Activated T-helper 1 cell treated with anti-CD3 and anti-CD28 coated beads, Interleukin-12 subunit alpha, Interleukin-12 subunit beta, Interleukin-2, Interleukin-4 antibody, amounts not matched to agents 30 ng/mL and 10 ng/mL and 1 ng/mL, durations not matched to agents 14 hours and 24 hours and 36 hours (primary cell): ENCODE measurements at regions of chr1 and their contacts with region 1.

Region 1: DNA sequence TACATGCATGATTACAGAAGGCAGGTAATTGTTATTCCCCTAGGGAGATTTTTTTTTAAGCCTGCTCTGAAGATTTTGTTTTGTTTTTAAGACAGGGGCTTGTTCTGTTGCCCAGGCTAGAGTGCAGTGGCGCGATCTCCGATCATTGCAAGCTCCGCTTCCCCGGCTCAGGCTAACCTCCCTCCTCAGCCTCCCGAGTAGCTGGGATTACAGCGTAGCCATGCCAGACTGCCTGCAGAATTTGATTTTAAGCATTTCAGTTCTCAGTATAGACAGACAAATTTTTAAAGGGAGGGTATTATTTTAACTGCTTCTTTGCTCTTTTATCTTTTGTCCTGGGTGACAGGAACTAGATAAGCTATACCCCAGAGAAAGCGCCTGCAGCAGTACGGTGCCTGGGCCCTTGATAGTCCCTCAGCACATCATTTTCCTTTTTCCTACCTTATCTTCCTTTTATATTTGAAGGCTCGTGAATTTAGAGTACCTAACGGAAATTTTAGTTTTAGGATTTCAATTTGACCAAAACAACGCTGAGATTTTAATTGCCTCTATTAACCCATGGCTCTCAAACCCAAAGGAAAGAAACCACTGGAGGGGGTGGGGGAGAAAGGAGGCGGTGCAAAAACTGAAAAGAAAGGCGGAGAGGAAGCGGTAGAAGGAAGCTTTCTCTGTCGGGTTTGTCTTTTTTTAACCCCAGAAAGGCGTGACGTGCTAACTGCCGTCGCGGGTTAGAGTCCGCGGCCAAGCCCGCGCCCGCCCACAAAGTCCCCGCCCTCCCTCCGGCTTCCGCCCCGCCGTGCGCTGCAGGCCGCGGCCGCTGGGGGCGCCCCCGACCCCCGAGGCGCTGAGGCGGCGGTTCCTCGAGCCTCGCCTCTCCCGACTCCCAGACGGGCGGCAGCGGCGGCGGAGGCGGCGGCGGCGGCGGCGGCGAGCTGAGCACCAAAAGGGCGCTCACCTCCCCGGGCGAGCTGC is at the start of gene EEIG2:
- DNase-seq: peak; percentile 85
- H3K4me3 Mint-ChIP-seq: peak within 1 kb of the TSS; percentile 92
- H3K27ac Mint-ChIP-seq: peak within 1 kb of the TSS; percentile 83
- H3K4me1 Mint-ChIP-seq: peaks cover 31% of the 10 kb centered on the region
- H3K27me3 Mint-ChIP-seq: peaks cover 4% of the 10 kb centered on the region
- total RNA-seq, gene EEIG2: 16.7 and 18.5 TPM in 2 replicates

Region 2: GRCh38 chr1:106975944-106976343 is 1583.6 kb before region 1 on chr1:
- intact Hi-C with region 1: no loop called
- DNase-seq: no peak
- H3K4me3 Mint-ChIP-seq: no peak overlapping the region
- H3K27ac Mint-ChIP-seq: no peak overlapping the region
- H3K4me1 Mint-ChIP-seq: no peaks in the 10 kb centered on the region
- H3K27me3 Mint-ChIP-seq: no peaks in the 10 kb centered on the region

Region 3: DNA sequence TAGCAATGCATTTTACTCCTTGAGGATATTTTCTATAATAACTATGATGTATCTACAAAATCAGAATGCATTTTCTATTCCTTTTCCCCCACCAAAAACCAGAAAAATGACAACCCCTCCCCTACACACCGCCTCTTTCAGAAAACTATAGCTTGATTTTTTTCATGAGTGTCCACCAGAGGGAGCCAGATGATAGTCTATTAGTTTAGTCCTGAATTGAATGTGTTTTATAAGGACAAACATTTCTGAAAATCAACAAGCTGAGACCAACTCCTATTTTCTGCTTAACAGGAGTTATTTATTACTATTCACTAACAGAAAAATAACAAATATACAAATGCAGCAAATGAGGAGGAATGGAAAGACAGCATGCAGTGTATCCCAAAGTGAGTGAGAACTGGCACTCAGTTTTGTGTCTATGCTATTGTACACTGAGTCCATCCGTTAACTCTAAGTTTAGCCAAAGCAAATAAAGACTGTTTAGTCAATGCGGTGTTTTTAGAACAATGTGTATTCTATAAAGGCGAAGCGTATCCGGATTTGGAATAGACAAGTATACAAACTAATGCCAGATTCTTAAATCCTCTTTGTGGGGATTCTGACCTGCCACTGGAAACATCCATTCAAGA is 777.2 kb before region 1 on chr1:
- intact Hi-C with region 1: loop called (anchors 2 kb)
- DNase-seq: peak; percentile 16
- H3K4me3 Mint-ChIP-seq: no peak overlapping the region
- H3K27ac Mint-ChIP-seq: no peak overlapping the region
- H3K4me1 Mint-ChIP-seq: peaks cover 21% of the 10 kb centered on the region
- H3K27me3 Mint-ChIP-seq: no peaks in the 10 kb centered on the region

Region 4: GRCh38 chr1:108199781-108200570 is 359.5 kb before region 1 on chr1 and contains the start of gene SLC25A24:
- intact Hi-C with region 1: loop called (anchors 5 kb)
- DNase-seq: peak; percentile 83
- H3K4me3 Mint-ChIP-seq: peak within 1 kb of the TSS; percentile 91
- H3K27ac Mint-ChIP-seq: peak within 1 kb of the TSS; percentile 78
- H3K4me1 Mint-ChIP-seq: peaks cover 38% of the 10 kb centered on the region
- H3K27me3 Mint-ChIP-seq: peaks cover 7% of the 10 kb centered on the region
- total RNA-seq, gene SLC25A24: 14.6 and 16.6 TPM in 2 replicates

Region 5: GRCh38 chr1:108504447-108504846 is 55.1 kb before region 1 on chr1:
- intact Hi-C with region 1: loop called (anchors 2 kb)
- DNase-seq: no peak
- H3K4me3 Mint-ChIP-seq: no peak overlapping the region
- H3K27ac Mint-ChIP-seq: no peak overlapping the region
- H3K4me1 Mint-ChIP-seq: no peaks in the 10 kb centered on the region
- H3K27me3 Mint-ChIP-seq: peaks cover 41% of the 10 kb centered on the region

Region 6: DNA sequence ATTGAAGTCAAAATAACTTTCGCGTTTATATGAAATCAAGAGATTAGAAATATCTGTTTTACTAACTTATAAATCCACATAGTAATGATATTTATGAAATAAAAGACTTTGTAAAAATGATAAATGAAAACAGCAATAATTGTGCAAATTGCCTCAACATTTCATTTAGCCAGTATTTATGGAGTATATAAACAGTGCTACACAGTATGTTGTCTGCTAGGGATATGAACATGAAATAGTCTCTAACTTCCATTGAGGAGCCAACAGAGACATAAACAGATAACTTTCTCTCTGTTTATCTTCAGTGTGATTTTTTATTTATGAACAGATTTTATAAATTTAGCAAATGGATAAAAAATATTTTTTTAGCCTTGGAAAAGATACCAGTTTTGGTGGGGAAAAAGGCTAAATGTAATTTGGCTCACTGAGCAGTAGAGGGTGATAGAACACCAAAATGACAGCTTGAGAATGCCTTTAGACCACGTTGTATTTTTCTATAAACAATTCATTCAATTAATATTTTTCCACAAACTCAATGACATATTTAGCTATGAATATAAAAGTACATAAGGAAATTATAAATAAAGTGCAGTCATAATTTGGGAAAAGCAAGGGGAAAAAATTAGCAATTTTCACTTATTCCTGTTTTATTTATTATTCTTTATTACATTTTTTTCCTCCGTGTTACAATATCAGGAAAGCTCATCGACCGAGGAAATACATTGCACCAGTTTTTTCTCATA is 47.1 kb before region 1 on chr1:
- intact Hi-C with region 1: loop called (anchors 1 kb)
- DNase-seq: no peak
- H3K4me3 Mint-ChIP-seq: no peak overlapping the region
- H3K27ac Mint-ChIP-seq: no peak overlapping the region
- H3K4me1 Mint-ChIP-seq: no peaks in the 10 kb centered on the region
- H3K27me3 Mint-ChIP-seq: peaks cover 46% of the 10 kb centered on the region

Region 7: DNA sequence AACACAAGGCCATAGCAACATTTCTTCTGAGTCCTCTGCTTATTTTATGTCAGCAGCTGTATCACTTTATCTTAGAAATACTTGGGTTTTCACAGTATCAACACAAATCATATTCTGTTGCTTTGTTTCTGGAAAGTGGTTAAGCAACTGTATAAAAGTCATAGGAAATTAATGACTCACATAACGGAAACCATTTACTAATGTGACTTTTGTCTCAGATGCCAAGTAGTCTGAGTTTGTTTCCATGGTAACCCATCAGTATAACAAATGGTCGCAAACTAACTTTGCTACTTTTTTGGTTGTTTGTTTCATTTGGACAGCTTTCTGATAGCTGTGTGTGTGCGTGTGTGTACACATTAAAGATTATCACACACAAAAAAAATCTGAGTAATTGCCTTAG is 31.5 kb after region 1 on chr1:
- intact Hi-C with region 1: loop called (anchors 1 kb)
- DNase-seq: no peak
- H3K4me3 Mint-ChIP-seq: no peak overlapping the region
- H3K27ac Mint-ChIP-seq: peak overlapping the region; percentile 75
- H3K4me1 Mint-ChIP-seq: peaks cover 49% of the 10 kb centered on the region
- H3K27me3 Mint-ChIP-seq: peaks cover 2% of the 10 kb centered on the region

Region 8: DNA sequence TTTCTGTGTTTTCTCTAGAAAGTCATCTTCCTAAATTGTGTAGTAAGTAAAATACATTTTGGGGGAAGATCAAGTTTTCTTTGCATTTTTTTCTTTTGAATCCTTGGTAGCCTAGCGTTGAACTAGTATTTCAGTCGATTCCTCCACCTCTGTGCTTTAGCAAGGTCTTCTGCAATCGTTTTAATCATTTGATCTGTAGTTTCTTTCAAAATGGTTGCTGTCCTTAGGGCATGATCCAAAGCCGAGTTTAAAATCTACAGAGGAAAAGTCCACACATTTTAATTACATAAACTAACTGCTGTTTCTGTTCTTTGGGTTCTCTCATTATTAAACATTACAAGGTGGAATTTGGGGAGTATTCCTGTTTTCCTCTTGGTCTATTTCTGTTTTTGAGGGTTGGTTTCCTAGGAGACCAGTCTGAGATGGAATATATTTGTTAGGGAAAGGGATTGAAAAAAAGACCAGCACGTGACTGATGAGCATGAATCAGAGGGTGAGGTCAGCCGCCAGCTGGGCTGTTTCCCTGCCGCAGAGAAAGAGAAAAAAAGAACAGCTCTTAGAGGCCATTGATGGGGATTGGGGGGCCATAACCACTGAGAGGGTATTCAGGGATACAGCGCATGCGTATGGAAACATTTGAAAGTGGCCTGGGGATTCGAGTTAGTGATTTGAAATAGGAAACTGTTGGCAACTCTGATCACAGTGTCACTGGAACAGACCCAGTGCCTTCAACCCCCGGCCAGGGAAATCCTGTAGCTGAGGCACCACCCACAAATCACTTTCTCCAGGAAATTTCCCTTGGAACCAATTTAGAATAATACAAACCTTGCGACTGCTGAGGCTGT is 256.8 kb after region 1 on chr1:
- intact Hi-C with region 1: no loop called
- DNase-seq: no peak
- H3K4me3 Mint-ChIP-seq: no peak overlapping the region
- H3K27ac Mint-ChIP-seq: no peak overlapping the region
- H3K4me1 Mint-ChIP-seq: no peaks in the 10 kb centered on the region
- H3K27me3 Mint-ChIP-seq: peaks cover 7% of the 10 kb centered on the region